ENCODE measurements at regions of chr5 and their contacts with region 1.

Region 1: DNA sequence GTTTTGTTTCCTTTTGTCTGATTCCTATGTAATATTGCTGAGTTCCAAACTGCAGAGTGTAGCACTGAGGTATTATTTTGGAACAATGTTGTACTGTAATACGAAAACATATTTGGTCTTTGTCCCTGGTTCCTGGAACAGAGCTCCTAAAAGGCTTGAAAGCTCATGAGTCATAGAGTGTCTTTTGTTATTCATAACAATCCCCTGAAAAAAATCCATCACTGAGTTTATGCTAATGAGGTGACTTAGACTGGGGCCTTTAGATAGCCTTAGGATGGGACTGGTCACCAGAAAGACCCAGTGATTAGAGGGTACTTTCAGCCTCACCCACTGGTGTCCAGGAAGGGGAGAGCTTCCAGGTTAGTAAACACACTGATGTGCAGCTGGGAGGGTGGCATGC is 132.7 kb upstream of the POU5F2 start:
- DNase-seq: no peak
- H3K4me3 Mint-ChIP-seq: no peak overlapping the region
- H3K27ac Mint-ChIP-seq: no peak overlapping the region
- H3K4me1 Mint-ChIP-seq: peaks cover 15% of the 10 kb centered on the region
- H3K27me3 Mint-ChIP-seq: no peaks in the 10 kb centered on the region

Region 2: GRCh38 chr5:93570294-93571113 is 303.6 kb before region 1 on chr5:
- CTCF ChIA-PET with region 1: no interaction called
- intact Hi-C with region 1: loop called (anchors 2 kb)
- DNase-seq: no peak
- H3K4me3 Mint-ChIP-seq: peak overlapping the region; percentile 12
- H3K27ac Mint-ChIP-seq: no peak overlapping the region
- H3K4me1 Mint-ChIP-seq: peaks cover 23% of the 10 kb centered on the region
- H3K27me3 Mint-ChIP-seq: peaks cover 71% of the 10 kb centered on the region

Region 3: GRCh38 chr5:94153736-94154450 is 279.8 kb after region 1 on chr5:
- CTCF ChIA-PET with region 1: no interaction called
- intact Hi-C with region 1: no loop called
- DNase-seq: no peak
- H3K4me3 Mint-ChIP-seq: no peak overlapping the region
- H3K27ac Mint-ChIP-seq: no peak overlapping the region
- H3K4me1 Mint-ChIP-seq: no peaks in the 10 kb centered on the region
- H3K27me3 Mint-ChIP-seq: no peaks in the 10 kb centered on the region